ENCODE measurements at regions of chr1 and their contacts with region 1.

Region 1: GRCh38 chr1:198657550-198658064 is 18.8 kb downstream of the PTPRC start:
- DNase-seq: peak in 1 of 2 donors; percentile 81
- ATAC-seq: peak; percentile 39 to 66 (median 55)
- H3K4me3 ChIP-seq: peak overlapping the region; percentile 2
- H3K4me3 Mint-ChIP-seq: peak overlapping the region; percentile 85
- H3K27ac ChIP-seq: peak overlapping the region; percentile 88
- H3K27ac Mint-ChIP-seq: peak overlapping the region; percentile 90 to 94
- H3K4me1 ChIP-seq: peaks cover 22% of the 10 kb centered on the region
- H3K4me1 Mint-ChIP-seq: peaks cover 61 to 63% of the 10 kb centered on the region in 2 donors
- H3K27me3 ChIP-seq: no peaks in the 10 kb centered on the region
- H3K27me3 Mint-ChIP-seq: no peaks in the 10 kb centered on the region
- CTCF ChIP-seq: no peak

Region 2: DNA sequence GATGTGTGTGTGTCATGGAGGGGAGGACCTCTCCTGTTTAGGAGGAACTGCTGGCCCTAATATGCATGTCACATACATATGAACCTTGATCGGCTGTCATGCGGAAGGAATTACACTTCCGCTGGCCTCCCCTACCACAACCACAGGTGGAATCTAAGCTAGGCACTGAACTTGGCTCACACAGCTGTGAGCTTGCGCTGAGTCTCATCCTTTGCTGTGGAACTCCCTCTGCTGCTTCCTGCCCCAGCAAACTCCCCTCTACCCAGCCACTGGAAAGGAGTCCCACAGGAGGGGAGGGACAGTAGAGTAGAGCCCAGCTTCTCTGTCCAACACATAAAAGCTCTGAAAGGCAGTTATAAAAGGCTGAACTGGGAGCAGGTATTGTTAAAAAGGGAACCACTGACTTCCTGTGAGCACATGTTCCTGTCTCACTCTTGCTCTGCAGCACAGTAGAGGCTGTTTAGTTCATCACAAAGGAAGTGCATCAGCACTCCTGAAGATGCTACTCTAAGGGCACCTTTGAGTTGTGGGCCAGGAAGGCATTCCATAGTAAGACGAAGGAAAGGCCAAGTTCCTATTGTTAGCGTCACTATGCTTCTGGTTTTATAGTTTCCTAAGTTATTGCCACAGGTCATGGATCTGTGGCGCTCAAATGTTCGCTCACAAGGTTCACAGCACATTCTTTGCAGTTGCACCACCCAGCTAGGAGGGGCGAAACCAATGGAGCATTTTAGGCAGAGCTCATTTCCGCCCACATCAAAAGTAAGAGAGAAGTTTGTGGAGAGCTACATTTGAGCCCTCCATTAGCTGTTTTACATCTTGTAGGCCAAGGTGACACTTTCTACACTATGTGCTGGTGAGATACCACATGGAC is 36.4 kb before region 1 on chr1:
- intact Hi-C with region 1: loop called (anchors 5 kb)
- DNase-seq: peak; percentile 53 to 86
- ATAC-seq: peak; percentile 70 to 87 (median 83)
- H3K4me3 ChIP-seq: peak overlapping the region; percentile 16
- H3K4me3 Mint-ChIP-seq: peak overlapping the region; percentile 95
- H3K27ac ChIP-seq: peak overlapping the region; percentile 94
- H3K27ac Mint-ChIP-seq: peak overlapping the region; percentile 91 to 99
- H3K4me1 ChIP-seq: peaks cover 54% of the 10 kb centered on the region
- H3K4me1 Mint-ChIP-seq: peaks cover 78 to 81% of the 10 kb centered on the region in 2 donors
- H3K27me3 ChIP-seq: no peaks in the 10 kb centered on the region
- H3K27me3 Mint-ChIP-seq: no peaks in the 10 kb centered on the region
- CTCF ChIP-seq: no peak

Region 3: GRCh38 chr1:198669023-198669698 is 11.6 kb after region 1 on chr1:
- intact Hi-C with region 1: loop called (anchors 1 kb)
- DNase-seq: peak; percentile 55 to 78
- ATAC-seq: peak; percentile 81 to 89 (median 87)
- H3K4me3 ChIP-seq: no peak overlapping the region
- H3K4me3 Mint-ChIP-seq: peak overlapping the region; percentile 70
- H3K27ac ChIP-seq: peak overlapping the region; percentile 86
- H3K27ac Mint-ChIP-seq: peak overlapping the region; percentile 88 to 90
- H3K4me1 ChIP-seq: peaks cover 35% of the 10 kb centered on the region
- H3K4me1 Mint-ChIP-seq: peaks cover 82 to 83% of the 10 kb centered on the region in 2 donors
- H3K27me3 ChIP-seq: no peaks in the 10 kb centered on the region
- H3K27me3 Mint-ChIP-seq: no peaks in the 10 kb centered on the region
- CTCF ChIP-seq: no peak

Region 4: GRCh38 chr1:198681831-198682759 is 24.5 kb after region 1 on chr1:
- intact Hi-C with region 1: loop called (anchors 1 kb)
- DNase-seq: peak; percentile 63 to 96
- ATAC-seq: peak; percentile 66 to 93 (median 86)
- H3K4me3 ChIP-seq: peak overlapping the region; percentile 21
- H3K4me3 Mint-ChIP-seq: peak overlapping the region; percentile 78
- H3K27ac ChIP-seq: peak overlapping the region; percentile 90
- H3K27ac Mint-ChIP-seq: peak overlapping the region; percentile 88 to 90
- H3K4me1 ChIP-seq: peaks cover 27% of the 10 kb centered on the region
- H3K4me1 Mint-ChIP-seq: peaks cover 82 to 83% of the 10 kb centered on the region in 2 donors
- H3K27me3 ChIP-seq: no peaks in the 10 kb centered on the region
- H3K27me3 Mint-ChIP-seq: no peaks in the 10 kb centered on the region
- CTCF ChIP-seq: no peak

Region 5: GRCh38 chr1:198741744-198742143 is 84.1 kb after region 1 on chr1:
- intact Hi-C with region 1: no loop called
- DNase-seq: no peak
- ATAC-seq: no peak
- H3K4me3 ChIP-seq: no peak overlapping the region
- H3K4me3 Mint-ChIP-seq: no peak overlapping the region
- H3K27ac ChIP-seq: no peak overlapping the region
- H3K27ac Mint-ChIP-seq: peak overlapping the region in 1 of 2 donors; percentile 75
- H3K4me1 ChIP-seq: no peaks in the 10 kb centered on the region
- H3K4me1 Mint-ChIP-seq: peaks cover 44 to 56% of the 10 kb centered on the region in 2 donors
- H3K27me3 ChIP-seq: no peaks in the 10 kb centered on the region
- H3K27me3 Mint-ChIP-seq: no peaks in the 10 kb centered on the region
- CTCF ChIP-seq: no peak

Region 6: GRCh38 chr1:198848649-198849048 is 191.0 kb after region 1 on chr1:
- intact Hi-C with region 1: no loop called
- DNase-seq: no peak
- ATAC-seq: no peak
- H3K4me3 ChIP-seq: no peak overlapping the region
- H3K4me3 Mint-ChIP-seq: no peak overlapping the region
- H3K27ac ChIP-seq: no peak overlapping the region
- H3K27ac Mint-ChIP-seq: no peak overlapping the region
- H3K4me1 ChIP-seq: no peaks in the 10 kb centered on the region
- H3K4me1 Mint-ChIP-seq: peaks cover 6 to 7% of the 10 kb centered on the region in 2 donors
- H3K27me3 ChIP-seq: no peaks in the 10 kb centered on the region
- H3K27me3 Mint-ChIP-seq: no peaks in the 10 kb centered on the region
- CTCF ChIP-seq: no peak

Region 7: DNA sequence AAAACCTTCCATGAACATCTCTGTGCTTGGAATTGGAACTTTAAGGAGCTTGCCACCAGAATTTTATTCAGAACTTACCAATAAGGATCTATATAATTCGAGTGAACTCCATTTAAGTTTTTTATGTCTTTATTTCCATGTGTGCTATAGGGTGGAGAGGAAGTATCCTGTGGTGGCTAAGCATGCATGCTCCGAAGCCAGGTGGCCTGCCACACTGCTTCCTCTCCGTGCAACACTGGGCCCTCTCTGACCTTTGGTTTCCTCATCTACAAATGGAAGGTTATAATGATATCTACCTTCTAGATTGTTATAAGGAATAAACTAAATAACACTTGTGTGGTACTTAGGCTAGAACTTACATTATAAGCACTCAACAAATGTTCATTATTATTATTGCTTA is 363.3 kb after region 1 on chr1:
- intact Hi-C with region 1: no loop called
- DNase-seq: no peak
- ATAC-seq: peak in 1 of 3 donors; percentile 37
- H3K4me3 ChIP-seq: no peak overlapping the region
- H3K4me3 Mint-ChIP-seq: no peak overlapping the region
- H3K27ac ChIP-seq: no peak overlapping the region
- H3K27ac Mint-ChIP-seq: no peak overlapping the region
- H3K4me1 ChIP-seq: peaks cover 3% of the 10 kb centered on the region
- H3K4me1 Mint-ChIP-seq: peaks cover 5 to 12% of the 10 kb centered on the region in 2 donors
- H3K27me3 ChIP-seq: no peaks in the 10 kb centered on the region
- H3K27me3 Mint-ChIP-seq: no peaks in the 10 kb centered on the region
- CTCF ChIP-seq: no peak